A549 (cell line): ENCODE measurements at regions of chr16 and their contacts with region 1.

Region 1: GRCh38 chr16:75198135-75198600 is 8.8 kb downstream of the CTRB2 start:
- DNase-seq: no peak
- ATAC-seq: peak; percentile 22 to 44; a peak in 3 of 6 replicates
- H3K4me3 ChIP-seq: no peak overlapping the region
- H3K27ac ChIP-seq: peak overlapping the region in 1 of 2 experiments; percentile 33; a peak in 2 of 6 replicates
- H3K4me1 ChIP-seq: no peaks in the 10 kb centered on the region
- CTCF ChIP-seq: no peak
- EP300 ChIP-seq: no peak
- POLR2A ChIP-seq: no peak
- RAD21 ChIP-seq: no peak

Region 2: DNA sequence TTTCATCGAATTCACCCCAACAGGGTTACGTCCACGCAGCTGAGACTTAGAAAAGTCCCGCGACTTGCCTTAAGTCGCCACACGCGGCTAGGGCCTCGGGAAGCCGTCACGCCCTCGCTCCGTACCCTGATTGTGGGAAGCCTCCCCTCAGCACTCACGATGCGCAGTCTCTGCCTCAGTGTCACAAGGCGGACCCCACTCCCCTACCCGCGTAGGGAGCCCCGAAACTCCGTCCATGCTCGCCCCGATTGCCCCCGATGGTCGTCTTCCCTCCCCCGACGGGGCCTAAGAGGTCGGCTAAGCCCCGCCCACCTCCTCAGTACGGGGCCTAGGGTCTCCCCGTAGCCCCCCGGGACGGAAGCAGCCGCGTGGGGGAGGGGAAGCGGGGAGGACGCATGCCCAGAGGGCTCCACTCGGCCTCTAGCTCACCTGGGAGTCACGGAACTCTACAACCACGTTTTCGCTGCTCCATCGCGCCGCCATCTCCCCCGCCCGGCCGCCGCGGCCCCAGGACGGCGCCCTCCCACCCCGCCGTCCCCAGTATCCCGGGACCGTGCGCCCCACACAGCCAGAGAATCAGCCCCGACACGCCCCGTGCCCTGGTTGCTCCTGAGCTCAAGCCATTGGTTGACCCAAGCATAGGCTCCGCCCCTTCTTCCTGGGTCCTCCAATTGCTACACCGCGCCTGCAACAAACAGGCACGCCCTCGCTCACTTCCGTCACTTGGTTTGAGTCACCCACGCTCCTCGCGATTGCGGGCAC is 213.5 kb before region 1 on chr16 and contains the start of gene WDR59:
- CTCF ChIA-PET with region 1: interaction called, 10 read pairs
- POLR2A ChIA-PET with region 1: no interaction called
- DNase-seq: peak; percentile 54 to 94
- ATAC-seq: peak; percentile 99
- H3K4me3 ChIP-seq: peak within 1 kb of the TSS; percentile 100
- H3K27ac ChIP-seq: peak within 1 kb of the TSS; percentile 92 to 94
- H3K4me1 ChIP-seq: 0 out of 3 replicates have a peak, but pooled peaks cover 2% of the 10 kb centered on the region
- CTCF ChIP-seq: no peak
- EP300 ChIP-seq: no peak
- POLR2A ChIP-seq: peak; percentile 72
- RAD21 ChIP-seq: no peak
- polyA plus RNA-seq, gene WDR59: 52.2 and 57.2 TPM in 2 replicates

Region 3: GRCh38 chr16:75333721-75334163 is 135.6 kb after region 1 on chr16:
- CTCF ChIA-PET with region 1: no interaction called
- POLR2A ChIA-PET with region 1: no interaction called
- DNase-seq: no peak
- ATAC-seq: no peak
- H3K4me3 ChIP-seq: no peak overlapping the region
- H3K27ac ChIP-seq: no peak overlapping the region
- H3K4me1 ChIP-seq: no peaks in the 10 kb centered on the region
- CTCF ChIP-seq: no peak
- EP300 ChIP-seq: no peak
- POLR2A ChIP-seq: no peak
- RAD21 ChIP-seq: no peak

Region 4: GRCh38 chr16:75361936-75362335 is 163.8 kb after region 1 on chr16:
- CTCF ChIA-PET with region 1: interaction called, 11 read pairs
- POLR2A ChIA-PET with region 1: no interaction called
- DNase-seq: no peak
- ATAC-seq: no peak
- H3K4me3 ChIP-seq: no peak overlapping the region
- H3K27ac ChIP-seq: no peak overlapping the region
- H3K4me1 ChIP-seq: no peaks in the 10 kb centered on the region
- CTCF ChIP-seq: no peak
- EP300 ChIP-seq: no peak
- POLR2A ChIP-seq: no peak
- RAD21 ChIP-seq: no peak

Region 5: DNA sequence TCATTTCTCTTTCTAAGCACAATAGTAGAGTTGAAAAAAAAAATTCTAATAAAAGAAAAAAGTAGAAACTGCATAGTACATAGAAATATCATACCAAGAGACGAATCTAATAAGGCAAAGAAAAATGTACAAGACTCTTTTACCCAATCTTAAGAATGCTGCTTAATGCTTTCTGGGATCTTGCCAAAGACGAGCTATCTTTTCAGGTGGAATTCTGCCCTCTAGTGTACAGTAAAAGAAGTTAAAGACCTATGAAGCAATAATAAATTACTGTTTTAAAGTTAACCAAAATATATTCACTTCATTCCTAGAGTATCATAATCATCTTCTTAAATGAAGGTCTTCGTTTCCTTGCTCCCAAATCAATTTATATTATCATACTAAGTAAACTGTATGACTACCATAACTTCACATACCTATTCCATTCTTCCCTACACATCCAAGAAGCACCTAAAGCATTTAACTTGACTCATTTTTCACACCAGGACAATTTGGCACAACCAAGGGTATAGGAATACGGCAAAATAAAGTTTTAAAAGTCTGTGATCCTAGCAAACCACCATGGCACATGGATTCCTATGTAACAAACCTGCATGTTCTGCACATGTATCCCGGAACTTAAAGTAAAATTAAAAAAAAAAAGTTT is 187.5 kb after region 1 on chr16:
- CTCF ChIA-PET with region 1: interaction called, 49 read pairs
- POLR2A ChIA-PET with region 1: interaction called, 6 read pairs
- DNase-seq: peak; percentile 21 to 78
- ATAC-seq: peak in 1 of 2 experiments; percentile 55; a peak in 3 of 6 replicates
- H3K4me3 ChIP-seq: no peak overlapping the region
- H3K27ac ChIP-seq: peak overlapping the region; percentile 59 to 72; a peak in 3 of 6 replicates
- H3K4me1 ChIP-seq: peaks cover 7% of the 10 kb centered on the region; the same call in 2 of the 3 replicates
- CTCF ChIP-seq: peak; percentile 93
- EP300 ChIP-seq: no peak
- POLR2A ChIP-seq: no peak
- RAD21 ChIP-seq: peak; percentile 92 to 95

Region 6: DNA sequence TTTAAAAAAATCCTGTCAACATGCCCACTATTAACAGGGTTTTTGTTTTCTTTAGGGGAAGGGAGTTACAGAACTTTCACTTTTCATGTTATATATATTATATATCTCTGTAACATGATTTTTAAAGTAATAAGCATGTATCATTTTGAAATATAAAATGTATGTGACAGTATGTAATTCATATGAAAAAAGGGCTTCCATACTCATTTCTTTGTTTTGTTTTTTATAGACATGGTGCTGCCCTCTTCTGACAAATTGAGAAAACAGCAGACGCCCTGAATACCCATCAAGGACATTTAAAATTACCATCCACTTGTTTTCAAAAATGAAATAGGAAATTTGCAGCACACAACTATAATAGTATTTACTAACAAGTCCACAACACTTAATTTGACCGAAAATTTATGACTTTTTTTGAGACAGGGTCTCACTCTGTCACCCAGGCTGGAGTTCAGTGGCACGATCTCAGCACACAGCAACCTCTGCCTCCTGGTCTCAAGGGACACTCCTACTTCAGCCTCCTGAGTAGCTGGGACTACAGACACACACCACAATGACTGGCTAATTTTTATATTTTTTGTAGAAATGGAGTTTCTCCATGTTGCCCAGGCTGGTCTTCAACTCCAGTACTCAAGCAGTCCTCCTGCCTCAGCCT is 204.8 kb after region 1 on chr16:
- CTCF ChIA-PET with region 1: interaction called, 158 read pairs
- POLR2A ChIA-PET with region 1: no interaction called
- DNase-seq: peak; percentile 33 to 44
- ATAC-seq: peak in 1 of 2 experiments; percentile 64; a peak in 2 of 6 replicates
- H3K4me3 ChIP-seq: no peak overlapping the region
- H3K27ac ChIP-seq: no peak overlapping the region
- H3K4me1 ChIP-seq: no peaks in the 10 kb centered on the region
- CTCF ChIP-seq: peak; percentile 77
- EP300 ChIP-seq: no peak
- POLR2A ChIP-seq: no peak
- RAD21 ChIP-seq: peak; percentile 58 to 67